A673 (cell line): ENCODE measurements at regions of chr1 and their contacts with region 1.

Region 1: GRCh38 chr1:55235722-55236121 is 20.6 kb upstream of the USP24 start:
- DNase-seq: peak; percentile 16
- H3K4me3 ChIP-seq: no peak overlapping the region
- H3K27ac ChIP-seq: no peak overlapping the region
- H3K4me1 ChIP-seq: no peaks in the 10 kb centered on the region
- H3K27me3 ChIP-seq: no peaks in the 10 kb centered on the region
- CTCF ChIP-seq: no peak

Region 2: DNA sequence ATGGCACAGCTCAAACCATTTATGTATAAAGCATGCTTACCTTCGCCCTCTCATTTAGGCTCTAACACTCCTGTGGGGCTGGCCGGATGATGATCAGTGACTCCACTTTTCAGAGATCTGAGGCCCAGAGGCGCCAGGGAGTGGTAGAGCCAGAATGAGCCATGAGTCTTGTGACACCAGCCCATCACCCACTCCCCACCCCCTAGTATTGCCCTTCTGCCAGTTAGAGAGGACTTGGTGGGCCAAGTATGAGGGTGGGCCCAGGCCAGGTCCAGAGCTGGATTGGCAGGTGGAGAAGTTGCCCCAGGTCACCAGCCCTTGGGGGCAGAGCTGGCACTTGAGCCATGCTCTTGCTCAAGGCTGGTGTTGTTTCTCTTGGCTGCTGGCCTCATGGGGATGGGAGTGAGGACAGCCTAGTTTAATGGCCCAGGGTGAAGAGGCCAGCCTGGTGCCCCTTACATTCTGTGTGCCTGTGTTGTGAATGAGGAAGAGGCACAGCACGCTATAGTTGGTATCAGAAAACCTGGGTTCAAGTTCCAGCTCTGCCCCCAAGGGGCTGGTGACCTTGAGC is 550.3 kb before region 1 on chr1:
- CTCF ChIA-PET with region 1: interaction called, 10 read pairs
- POLR2A ChIA-PET with region 1: no interaction called
- intact Hi-C with region 1: no loop called
- DNase-seq: no peak
- H3K4me3 ChIP-seq: no peak overlapping the region
- H3K27ac ChIP-seq: no peak overlapping the region
- H3K4me1 ChIP-seq: no peaks in the 10 kb centered on the region
- H3K27me3 ChIP-seq: no peaks in the 10 kb centered on the region
- CTCF ChIP-seq: no peak

Region 3: DNA sequence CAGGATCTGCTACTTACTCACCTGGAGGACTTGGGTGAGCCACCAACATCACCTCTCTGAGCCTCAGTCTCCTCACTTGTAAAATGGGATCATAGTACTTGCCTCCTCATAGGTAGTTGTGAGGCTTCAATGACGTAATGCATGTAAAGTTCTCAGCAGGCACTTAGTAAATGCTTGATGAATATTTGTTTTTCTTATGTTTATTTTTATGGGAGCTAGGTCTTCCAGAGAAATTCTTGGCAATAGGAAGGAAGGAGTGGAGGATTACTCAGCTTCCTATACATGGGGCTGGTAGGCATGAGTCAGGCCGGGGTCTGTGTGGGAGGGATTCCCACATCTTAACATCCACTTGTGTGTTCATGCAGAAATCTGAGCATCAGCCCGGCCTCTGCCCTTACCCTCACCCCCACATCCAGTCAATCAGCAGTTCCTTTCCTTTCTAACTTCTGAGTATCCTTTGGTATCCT is 74.8 kb after region 1 on chr1:
- CTCF ChIA-PET with region 1: no interaction called
- POLR2A ChIA-PET with region 1: no interaction called
- intact Hi-C with region 1: no loop called
- DNase-seq: peak; percentile 54
- H3K4me3 ChIP-seq: no peak overlapping the region
- H3K27ac ChIP-seq: no peak overlapping the region
- H3K4me1 ChIP-seq: no peaks in the 10 kb centered on the region
- H3K27me3 ChIP-seq: peaks cover 4% of the 10 kb centered on the region
- CTCF ChIP-seq: no peak